ENCODE measurements at regions of chr1 and their contacts with region 1.

Region 1: GRCh38 chr1:155688324-155689080 is at the start of gene YY1AP1:
- DNase-seq: peak; percentile 96
- H3K4me3 ChIP-seq: peak within 1 kb of the TSS; percentile 88 to 100 (median 96)
- H3K27ac ChIP-seq: peak within 1 kb of the TSS; percentile 95 to 99 (median 96)
- H3K4me1 ChIP-seq: peaks cover 0 to 52% (median 44%) of the 10 kb centered on the region in 4 donors
- H3K27me3 ChIP-seq: no peaks in the 10 kb centered on the region
- CTCF ChIP-seq: peak in 1 of 4 experiments; percentile 45
- EP300 ChIP-seq: no peak
- POLR2A ChIP-seq: peak; percentile 82 to 88
- total RNA-seq, gene YY1AP1: 54.3 to 195 (median 159) TPM

Region 2: DNA sequence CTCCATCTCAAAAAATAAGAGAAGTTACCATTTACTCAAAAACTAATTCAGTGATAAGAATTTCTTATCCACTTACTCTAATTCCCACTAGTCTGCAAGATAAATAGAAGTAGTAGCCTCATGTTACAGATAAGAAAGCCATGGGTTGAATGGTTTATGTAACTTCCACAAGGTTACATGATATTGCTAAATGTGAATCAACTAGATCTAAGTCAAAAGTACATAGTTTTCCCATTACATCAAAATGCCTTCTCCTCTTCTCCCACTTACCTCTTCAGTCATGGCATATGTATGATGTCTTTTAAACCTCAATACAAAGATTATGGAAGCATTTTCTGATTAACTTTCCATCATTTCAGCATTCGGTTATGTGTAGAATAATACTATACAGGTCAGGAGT is 234.4 kb before region 1 on chr1:
- intact Hi-C with region 1: no loop called
- DNase-seq: no peak
- H3K4me3 ChIP-seq: no peak overlapping the region
- H3K27ac ChIP-seq: no peak overlapping the region
- H3K4me1 ChIP-seq: peaks cover 0 to 21% (median 15%) of the 10 kb centered on the region in 4 donors
- H3K27me3 ChIP-seq: no peaks in the 10 kb centered on the region
- CTCF ChIP-seq: no peak
- EP300 ChIP-seq: no peak
- POLR2A ChIP-seq: no peak

Region 3: GRCh38 chr1:155574077-155574476 is 114.4 kb before region 1 on chr1:
- intact Hi-C with region 1: no loop called
- DNase-seq: no peak
- H3K4me3 ChIP-seq: no peak overlapping the region
- H3K27ac ChIP-seq: no peak overlapping the region
- H3K4me1 ChIP-seq: no peaks in the 10 kb centered on the region
- H3K27me3 ChIP-seq: no peaks in the 10 kb centered on the region
- CTCF ChIP-seq: no peak
- EP300 ChIP-seq: no peak
- POLR2A ChIP-seq: no peak

Region 4: GRCh38 chr1:155622191-155622590 is 66.3 kb before region 1 on chr1:
- intact Hi-C with region 1: no loop called
- DNase-seq: no peak
- H3K4me3 ChIP-seq: no peak overlapping the region
- H3K27ac ChIP-seq: no peak overlapping the region
- H3K4me1 ChIP-seq: no peaks in the 10 kb centered on the region
- H3K27me3 ChIP-seq: no peaks in the 10 kb centered on the region
- CTCF ChIP-seq: no peak
- EP300 ChIP-seq: no peak
- POLR2A ChIP-seq: no peak

Region 5: GRCh38 chr1:155651861-155652661 is 36.4 kb before region 1 on chr1:
- intact Hi-C with region 1: no loop called
- DNase-seq: no peak
- H3K4me3 ChIP-seq: no peak overlapping the region
- H3K27ac ChIP-seq: peak overlapping the region in 1 of 4 donors; percentile 46
- H3K4me1 ChIP-seq: peaks cover 0 to 19% (median 16%) of the 10 kb centered on the region in 4 donors
- H3K27me3 ChIP-seq: no peaks in the 10 kb centered on the region
- CTCF ChIP-seq: no peak
- EP300 ChIP-seq: no peak
- POLR2A ChIP-seq: no peak

Region 6: DNA sequence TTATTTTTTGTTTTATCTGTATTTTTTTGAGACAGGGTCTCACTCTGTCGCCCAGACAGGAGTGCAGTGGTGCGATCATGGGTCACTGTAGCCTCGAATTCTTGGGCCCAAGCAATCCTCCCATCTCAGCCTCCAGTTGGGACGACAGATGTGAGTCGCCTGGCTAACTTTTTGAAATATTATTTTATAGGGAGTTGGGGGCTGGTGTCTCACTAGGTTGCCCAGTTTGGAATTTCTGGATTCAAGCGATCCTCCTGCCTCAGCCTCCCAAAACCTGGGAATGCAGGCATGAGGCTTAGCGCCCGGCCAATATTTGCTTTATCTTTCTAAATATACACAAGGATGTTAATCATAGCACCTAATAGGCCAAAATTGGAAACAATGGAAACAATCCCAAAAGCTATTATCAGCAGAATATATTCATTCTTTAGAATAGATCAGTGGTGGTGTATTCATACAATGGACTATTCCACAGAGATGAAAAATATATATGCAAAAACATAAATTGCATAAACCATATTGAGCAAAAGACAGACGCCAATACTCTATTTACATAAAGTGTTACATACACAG is 56.3 kb after region 1 on chr1:
- intact Hi-C with region 1: loop called (anchors 2 kb)
- DNase-seq: no peak
- H3K4me3 ChIP-seq: peak overlapping the region; percentile 47 to 61 (median 60)
- H3K27ac ChIP-seq: peak overlapping the region; percentile 72 to 83 (median 80)
- H3K4me1 ChIP-seq: peaks cover 0 to 6% (median 6%) of the 10 kb centered on the region in 4 donors
- H3K27me3 ChIP-seq: no peaks in the 10 kb centered on the region
- CTCF ChIP-seq: no peak
- EP300 ChIP-seq: no peak
- POLR2A ChIP-seq: no peak

Measured in sigmoid colon (tissue), 7 donors.